OCI-LY7 (cell line): ENCODE measurements at regions of chr6 and their contacts with region 1.

Region 1: DNA sequence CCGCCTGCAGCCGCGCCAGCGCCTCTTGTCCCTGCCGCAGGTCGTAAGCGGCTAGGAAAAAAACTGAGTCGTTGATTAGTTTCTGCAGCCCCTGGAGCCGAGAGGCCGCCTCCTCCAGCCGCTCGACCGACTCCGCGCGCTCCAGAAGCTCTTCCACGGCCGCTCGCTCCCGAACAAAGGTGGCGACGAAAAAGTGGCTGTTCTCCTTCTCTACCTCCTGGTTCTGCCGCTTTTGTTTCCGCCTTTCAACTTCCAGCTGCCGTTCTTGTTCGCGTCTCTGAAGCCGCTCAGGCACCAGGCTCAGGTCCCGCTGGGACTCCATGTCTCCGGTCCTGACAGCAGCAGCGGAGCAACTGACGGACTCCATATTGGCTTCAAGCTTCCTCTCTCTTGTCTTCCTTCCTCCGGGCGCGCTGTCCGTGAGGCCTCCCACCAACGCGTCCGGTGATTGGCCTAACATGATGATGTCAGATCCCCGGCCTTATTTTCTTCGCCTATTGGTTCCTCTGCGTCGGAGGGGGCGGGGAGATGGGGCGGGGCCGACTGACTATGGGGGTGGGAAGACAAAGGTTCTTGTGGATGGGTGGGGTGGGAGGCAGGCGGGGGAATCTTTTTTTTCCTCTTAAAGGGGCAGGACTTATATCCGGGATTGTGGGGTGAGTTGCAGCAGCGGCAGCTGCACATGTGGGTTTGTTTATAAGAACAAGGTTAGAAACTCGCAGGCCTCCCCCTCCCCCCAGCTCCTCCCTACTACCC is at the start of gene TBCC:
- DNase-seq: peak; percentile 99
- H3K4me3 ChIP-seq: peak within 1 kb of the TSS; percentile 82
- H3K27ac ChIP-seq: peak within 1 kb of the TSS; percentile 95
- H3K4me1 ChIP-seq: peaks cover 48% of the 10 kb centered on the region
- CTCF ChIP-seq: no peak
- total RNA-seq, gene TBCC: 118 and 136 TPM in 2 replicates

Region 2: DNA sequence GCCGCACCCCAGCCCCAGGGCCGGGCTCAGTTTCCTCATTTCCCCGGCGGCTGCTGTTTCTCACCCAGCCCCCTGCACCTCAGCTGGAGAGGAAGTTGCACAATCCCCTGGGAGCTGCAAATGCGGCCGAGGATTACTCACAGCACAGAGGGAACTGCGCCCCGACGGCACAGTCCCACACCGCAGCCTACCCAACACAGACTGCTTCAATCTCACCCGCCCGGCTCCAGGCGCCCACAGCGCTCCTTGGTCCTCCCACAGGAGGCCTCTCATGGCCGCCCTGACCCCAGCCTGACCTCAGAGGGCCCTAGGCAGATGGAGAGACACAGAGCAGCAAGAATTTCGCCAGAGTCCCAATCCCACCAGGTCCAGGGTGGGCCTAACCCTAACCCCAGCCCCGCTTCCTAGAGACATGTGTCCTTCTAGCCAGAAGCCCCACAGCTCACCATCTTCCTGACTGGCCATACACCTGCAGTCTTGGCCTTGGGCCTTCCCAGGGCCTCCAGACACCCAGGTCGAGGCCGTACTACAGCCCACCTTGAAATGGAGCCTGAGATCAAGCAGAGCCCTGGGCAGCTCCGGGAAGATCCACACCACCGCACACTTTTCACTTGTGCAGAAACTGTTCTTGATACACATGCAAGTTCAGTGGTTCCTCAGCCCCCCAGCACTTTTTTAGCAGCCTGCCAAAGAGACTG is 1022.2 kb before region 1 on chr6:
- CTCF ChIA-PET with region 1: no interaction called
- POLR2A ChIA-PET with region 1: no interaction called
- intact Hi-C with region 1: loop called (anchors 10 kb)
- DNase-seq: peak; percentile 94
- H3K4me3 ChIP-seq: peak overlapping the region; percentile 67
- H3K27ac ChIP-seq: peak overlapping the region; percentile 93
- H3K4me1 ChIP-seq: peaks cover 98% of the 10 kb centered on the region
- CTCF ChIP-seq: 0 out of 2 replicates have a peak, but pooled peaks have one; percentile 21

Region 3: GRCh38 chr6:42726485-42727086 is 19.3 kb before region 1 on chr6:
- CTCF ChIA-PET with region 1: interaction called, 6 read pairs
- POLR2A ChIA-PET with region 1: interaction called, 10 read pairs
- intact Hi-C with region 1: no loop called
- DNase-seq: peak; percentile 91
- H3K4me3 ChIP-seq: peak overlapping the region; percentile 31
- H3K27ac ChIP-seq: peak overlapping the region; percentile 50
- H3K4me1 ChIP-seq: peaks cover 16% of the 10 kb centered on the region
- CTCF ChIP-seq: peak; percentile 98

Region 4: DNA sequence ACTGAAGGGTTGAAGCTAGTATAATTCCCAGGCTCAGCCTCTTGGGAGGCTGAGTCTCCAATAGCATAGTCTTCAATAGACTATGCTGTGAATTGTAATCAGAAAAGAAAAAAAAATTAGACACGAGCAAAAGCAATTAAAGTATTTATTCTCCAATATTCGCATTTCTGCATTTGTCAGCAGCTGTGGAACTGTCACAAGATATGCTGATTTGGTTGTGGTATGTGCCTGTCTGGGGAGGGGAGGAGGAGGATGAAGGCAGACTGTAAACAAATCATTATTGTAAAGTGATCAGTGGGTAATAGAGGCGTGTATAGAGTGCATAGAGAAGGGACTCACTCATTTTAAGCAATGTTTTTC is 25.8 kb after region 1 on chr6:
- CTCF ChIA-PET with region 1: interaction called, 5 read pairs
- POLR2A ChIA-PET with region 1: interaction called, 494 read pairs
- intact Hi-C with region 1: loop called (anchors 1 kb)
- DNase-seq: peak; percentile 51
- H3K4me3 ChIP-seq: peak overlapping the region; percentile 67
- H3K27ac ChIP-seq: peak overlapping the region; percentile 96
- H3K4me1 ChIP-seq: peaks cover 72% of the 10 kb centered on the region
- CTCF ChIP-seq: no peak

Region 5: GRCh38 chr6:42791706-42792320 is 45.9 kb after region 1 on chr6:
- CTCF ChIA-PET with region 1: no interaction called
- POLR2A ChIA-PET with region 1: interaction called, 494 read pairs
- intact Hi-C with region 1: no loop called
- DNase-seq: no peak
- H3K4me3 ChIP-seq: no peak overlapping the region
- H3K27ac ChIP-seq: no peak overlapping the region
- H3K4me1 ChIP-seq: peaks cover 34% of the 10 kb centered on the region
- CTCF ChIP-seq: no peak

Region 6: DNA sequence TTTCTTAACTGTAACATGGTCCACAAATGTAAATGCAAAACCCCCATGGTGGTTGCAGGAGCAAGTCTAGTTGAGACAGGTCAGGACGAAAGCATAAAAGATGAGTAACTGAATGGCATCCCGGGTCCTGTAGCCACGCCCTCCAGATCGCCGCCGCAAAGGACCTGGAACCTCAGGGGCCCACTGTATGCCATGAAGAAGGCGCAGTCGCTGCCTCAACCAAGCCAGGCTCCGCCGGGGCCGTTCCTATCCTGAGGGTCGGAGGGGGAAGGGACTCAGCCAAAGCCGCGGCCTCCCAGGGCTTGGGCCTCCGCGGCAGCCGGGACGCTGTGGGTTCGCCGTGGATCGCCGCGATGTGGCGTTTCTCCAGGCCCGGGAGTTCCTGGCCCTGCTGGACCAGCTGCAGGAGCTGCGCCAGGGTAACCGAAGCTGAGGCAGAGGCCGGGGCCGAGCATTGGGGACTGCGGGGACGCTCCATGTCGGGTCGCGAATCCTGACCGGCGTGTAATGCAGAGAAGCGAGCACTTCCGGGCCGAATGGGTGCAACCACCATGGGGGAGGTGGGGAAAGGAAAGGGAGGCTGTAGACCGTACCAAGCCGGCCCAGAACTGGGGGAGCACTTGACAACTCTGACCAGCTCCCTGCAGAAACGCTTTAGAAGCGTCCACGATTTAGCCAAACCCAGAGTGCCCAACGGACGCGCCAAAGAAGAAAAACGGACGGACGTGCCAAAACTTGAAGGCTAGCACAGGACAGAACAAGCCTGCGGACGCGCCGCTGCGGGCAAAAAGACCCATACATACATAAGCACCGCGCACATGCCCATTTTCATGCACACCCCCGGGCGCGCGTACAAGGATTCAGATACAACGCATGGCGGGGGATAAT is 144.7 kb after region 1 on chr6:
- CTCF ChIA-PET with region 1: no interaction called
- POLR2A ChIA-PET with region 1: interaction called, 9 read pairs
- intact Hi-C with region 1: loop called (anchors 5 kb)
- DNase-seq: peak; percentile 97
- H3K4me3 ChIP-seq: peak overlapping the region; percentile 74
- H3K27ac ChIP-seq: peak overlapping the region; percentile 76
- H3K4me1 ChIP-seq: peaks cover 40% of the 10 kb centered on the region
- CTCF ChIP-seq: no peak

Region 7: DNA sequence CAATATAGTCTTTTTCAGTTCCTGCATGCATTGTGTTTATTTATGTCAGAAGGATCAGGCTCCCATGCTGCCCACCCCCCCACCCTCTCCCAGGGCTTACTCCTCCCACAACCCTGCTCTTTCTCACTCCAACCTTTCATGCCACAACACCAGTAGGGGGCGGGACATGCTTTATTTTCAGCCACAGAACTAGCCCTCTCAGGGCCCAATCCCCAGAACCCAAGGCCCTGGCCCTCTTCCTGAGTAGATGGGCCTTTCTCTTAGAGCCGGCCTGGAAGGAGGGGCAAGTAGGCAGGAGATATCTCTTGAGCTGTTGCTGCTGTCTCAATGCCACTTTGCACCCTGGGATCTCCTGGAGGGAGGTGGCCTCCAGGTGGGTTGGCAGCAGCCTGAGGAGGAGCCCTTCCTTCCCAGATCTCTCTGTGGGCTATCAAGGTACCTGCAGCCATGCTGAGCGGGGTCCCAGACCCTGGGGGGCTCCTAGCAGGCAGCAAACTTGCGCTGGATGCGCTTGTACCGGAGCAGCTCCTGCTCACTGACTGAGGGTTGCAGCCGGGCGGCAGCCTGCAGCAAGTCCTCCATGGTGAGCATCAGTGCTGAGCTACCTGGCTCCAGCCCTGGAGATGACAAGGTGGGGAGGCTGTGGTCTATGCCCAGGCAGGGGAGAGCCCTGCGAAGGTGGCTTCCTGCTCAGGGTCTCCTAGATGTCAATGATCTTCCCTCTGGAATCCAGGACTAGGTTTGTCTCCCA is 218.1 kb after region 1 on chr6:
- CTCF ChIA-PET with region 1: no interaction called
- POLR2A ChIA-PET with region 1: no interaction called
- intact Hi-C with region 1: no loop called
- DNase-seq: peak; percentile 58
- H3K4me3 ChIP-seq: no peak overlapping the region
- H3K27ac ChIP-seq: no peak overlapping the region
- H3K4me1 ChIP-seq: no peaks in the 10 kb centered on the region
- CTCF ChIP-seq: peak; percentile 64